GM10248 (cell line): ENCODE measurements at regions of chr2 and their contacts with region 1.

Region 1: DNA sequence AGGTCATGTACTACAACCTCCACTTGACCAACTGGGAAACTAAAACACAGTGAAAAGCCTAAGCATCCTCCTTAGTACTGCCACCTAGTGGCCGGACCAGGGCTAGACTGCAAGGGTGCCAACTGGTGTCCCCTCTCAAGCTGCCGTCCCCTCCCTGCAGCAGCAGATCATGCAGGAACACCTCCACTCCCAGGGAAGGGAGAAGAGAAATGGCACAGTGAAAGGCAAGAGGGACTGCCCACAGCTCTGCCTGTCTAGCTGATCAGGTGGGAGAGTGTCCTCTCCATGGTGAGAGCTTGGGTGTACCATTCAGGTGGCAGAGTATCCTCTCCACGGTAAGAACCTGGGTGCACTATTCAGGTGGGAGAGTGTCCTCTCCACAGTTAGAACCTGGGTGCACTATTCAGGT is 78.1 kb downstream of the AAK1 start:
- DNase-seq: peak; percentile 76
- CTCF ChIP-seq: peak; percentile 90

Region 2: GRCh38 chr2:68857855-68858456 is 707.5 kb before region 1 on chr2:
- CTCF ChIA-PET with region 1: no interaction called
- POLR2A ChIA-PET with region 1: no interaction called
- DNase-seq: no peak
- CTCF ChIP-seq: no peak

Region 3: GRCh38 chr2:69514406-69514805 is 51.0 kb before region 1 on chr2:
- CTCF ChIA-PET with region 1: interaction called, 10 read pairs
- POLR2A ChIA-PET with region 1: no interaction called
- DNase-seq: no peak
- CTCF ChIP-seq: no peak

Region 4: GRCh38 chr2:69545477-69545932 is 19.9 kb before region 1 on chr2:
- CTCF ChIA-PET with region 1: interaction called, 71 read pairs
- POLR2A ChIA-PET with region 1: no interaction called
- DNase-seq: peak; percentile 26
- CTCF ChIP-seq: no peak

Region 5: GRCh38 chr2:69597105-69597504 is 31.7 kb after region 1 on chr2:
- CTCF ChIA-PET with region 1: interaction called, 20 read pairs
- POLR2A ChIA-PET with region 1: no interaction called
- DNase-seq: no peak
- CTCF ChIP-seq: no peak

Region 6: GRCh38 chr2:69643602-69644505 is 78.4 kb after region 1 on chr2 and contains the start of gene AAK1:
- CTCF ChIA-PET with region 1: interaction called, 16 read pairs
- POLR2A ChIA-PET with region 1: no interaction called
- DNase-seq: peak; percentile 89
- CTCF ChIP-seq: no peak

Region 7: DNA sequence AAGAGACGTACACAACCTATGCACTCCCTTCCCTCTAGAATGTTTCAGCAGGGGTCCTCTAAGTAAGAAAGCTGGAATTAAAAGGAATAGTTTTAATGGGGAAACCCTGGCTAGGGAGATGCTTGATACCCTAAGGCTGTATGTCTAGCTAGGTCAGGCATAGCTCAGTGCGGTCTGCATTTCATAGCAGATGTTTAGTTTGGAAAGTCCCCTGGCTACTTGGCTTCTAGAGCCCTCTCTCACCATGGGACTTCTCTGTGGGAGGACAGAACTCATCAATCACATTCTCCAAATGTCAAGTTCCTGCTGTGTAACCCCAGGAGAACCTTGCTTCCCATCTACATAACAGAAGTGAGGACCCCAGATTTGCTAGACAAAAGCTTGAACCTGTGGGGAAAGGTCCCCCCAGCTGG is 152.4 kb after region 1 on chr2:
- CTCF ChIA-PET with region 1: interaction called, 51 read pairs
- POLR2A ChIA-PET with region 1: no interaction called
- DNase-seq: peak; percentile 55
- CTCF ChIP-seq: no peak